ENCODE measurements at regions of chr3 and their contacts with region 1.

Region 1: GRCh38 chr3:49841126-49841696 is 15.2 kb downstream of the TRAIP start:
- DNase-seq: no peak
- H3K4me3 ChIP-seq: no peak overlapping the region
- H3K27ac ChIP-seq: no peak overlapping the region
- H3K4me1 ChIP-seq: peaks cover 6% of the 10 kb centered on the region
- H3K27me3 ChIP-seq: no peaks in the 10 kb centered on the region
- CTCF ChIP-seq: no peak
- POLR2A ChIP-seq: no peak

Region 2: DNA sequence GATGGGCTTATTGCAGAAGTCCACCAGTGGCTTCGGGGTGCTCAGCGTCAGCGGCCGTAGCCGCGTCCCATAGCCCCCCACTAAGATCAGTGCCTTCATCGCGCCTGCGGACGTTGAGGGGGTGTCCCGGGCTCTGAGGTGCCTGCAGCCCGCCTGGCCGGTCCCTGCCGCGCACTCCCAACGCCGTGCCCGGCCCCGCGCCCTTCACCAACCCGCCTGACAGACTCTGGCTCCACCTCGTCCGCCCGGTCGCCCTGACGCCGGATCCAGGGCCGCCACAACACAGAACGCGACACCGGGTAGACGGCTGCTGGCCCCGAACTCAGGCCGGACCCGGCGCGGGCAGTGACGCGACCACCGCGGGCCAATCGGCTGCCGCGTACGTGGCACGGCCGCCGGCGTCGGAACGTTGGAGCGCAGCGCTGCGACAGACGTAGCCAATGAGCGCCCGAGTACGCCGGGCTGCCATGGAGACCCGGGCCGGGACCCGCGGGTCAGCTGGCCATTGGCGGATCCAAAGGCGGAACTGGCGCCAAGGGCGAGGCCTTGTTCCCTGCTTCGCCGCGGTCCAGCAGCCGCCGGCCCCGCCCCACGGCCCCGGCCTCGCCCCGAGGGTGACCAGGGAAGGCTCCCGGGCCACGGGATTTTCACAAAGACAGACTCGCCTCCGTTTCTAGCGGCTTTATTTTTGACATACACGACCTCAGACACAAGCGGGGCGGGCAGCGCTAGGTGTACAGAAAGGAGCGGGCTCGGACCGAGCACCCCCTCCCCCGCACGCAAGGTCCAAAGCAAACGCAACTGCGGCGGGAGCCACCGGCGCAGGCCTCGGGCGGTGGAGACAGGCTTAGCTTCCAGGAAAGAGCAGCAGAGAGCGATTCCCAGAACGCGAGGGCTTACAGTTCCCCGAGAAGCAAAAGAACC is 117.3 kb before region 1 on chr3 and contains the start of gene GMPPB:
- intact Hi-C with region 1: loop called (anchors 10 kb)
- DNase-seq: peak in 1 of 2 donors; percentile 97
- H3K4me3 ChIP-seq: peak within 1 kb of the TSS; percentile 88 to 93
- H3K27ac ChIP-seq: peak within 1 kb of the TSS; percentile 90
- H3K4me1 ChIP-seq: peaks cover 39% of the 10 kb centered on the region
- H3K27me3 ChIP-seq: no peaks in the 10 kb centered on the region
- CTCF ChIP-seq: no peak
- POLR2A ChIP-seq: peak in 1 of 2 donors; percentile 60
- total RNA-seq, gene GMPPB: 19.9 TPM

Region 3: DNA sequence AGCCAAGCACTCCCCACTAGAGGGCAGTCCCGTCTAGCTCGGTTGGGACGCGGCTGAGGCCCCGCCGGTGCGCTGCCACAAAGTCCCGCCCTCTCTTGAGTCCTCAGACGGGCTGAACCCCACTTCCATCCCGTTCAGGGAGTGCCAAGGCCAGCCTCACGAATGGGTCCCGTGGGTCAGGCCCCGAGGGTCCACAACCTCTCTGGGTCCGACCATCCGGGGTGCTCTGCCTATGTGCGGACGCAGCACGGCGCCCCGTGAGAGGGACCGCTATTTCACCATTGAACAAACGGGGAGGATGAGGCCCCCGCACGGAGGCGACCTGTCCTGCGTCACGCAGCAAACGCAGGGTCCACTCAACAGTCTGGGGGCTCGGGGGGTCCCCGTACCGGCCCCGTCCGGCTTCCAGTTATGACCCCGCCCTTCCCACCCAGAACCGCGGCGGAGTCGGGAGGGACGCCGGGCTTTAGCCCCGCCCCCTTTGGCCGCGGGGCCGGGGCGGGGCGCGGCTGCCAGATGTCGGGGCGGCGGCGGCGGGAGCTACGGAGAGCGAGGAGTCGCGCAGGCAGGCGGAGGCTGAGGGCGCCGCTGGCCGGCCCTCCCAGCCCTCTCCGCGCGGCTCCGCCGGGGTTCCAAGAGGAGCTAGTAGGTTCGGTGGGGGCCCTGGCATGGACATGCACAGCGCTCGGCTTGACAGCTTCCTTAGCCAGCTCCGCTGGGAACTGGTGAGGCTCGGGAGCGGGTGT is 38.3 kb before region 1 on chr3 and contains the start of gene INKA1:
- intact Hi-C with region 1: loop called (anchors 5 kb)
- DNase-seq: no peak
- H3K4me3 ChIP-seq: peak within 1 kb of the TSS; percentile 82 to 90
- H3K27ac ChIP-seq: peak within 1 kb of the TSS; percentile 98
- H3K4me1 ChIP-seq: peaks cover 46% of the 10 kb centered on the region
- H3K27me3 ChIP-seq: no peaks in the 10 kb centered on the region
- CTCF ChIP-seq: peak; percentile 80 to 93 (median 81)
- POLR2A ChIP-seq: peak in 1 of 2 donors; percentile 70
- total RNA-seq, gene INKA1: 12.5 TPM

Region 4: DNA sequence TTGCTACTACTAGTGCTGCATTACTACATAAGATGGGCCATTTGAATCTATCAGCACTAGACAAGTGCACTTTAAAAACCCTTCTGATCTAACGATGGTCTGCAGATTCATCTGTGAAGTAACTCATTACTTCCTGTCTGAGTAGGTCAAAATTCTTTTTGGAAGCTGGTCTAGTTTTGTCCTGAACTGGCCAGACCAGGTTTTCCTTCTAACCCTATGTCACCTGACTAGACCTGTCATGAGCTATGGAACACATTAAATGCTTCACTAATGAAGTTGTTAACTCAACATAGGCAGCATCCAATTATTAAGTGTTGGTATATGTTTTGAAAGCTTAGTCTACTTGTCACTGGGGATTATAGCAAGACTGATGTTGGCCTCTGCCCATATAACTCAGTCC is 237.4 kb after region 1 on chr3:
- intact Hi-C with region 1: no loop called
- DNase-seq: no peak
- H3K4me3 ChIP-seq: no peak overlapping the region
- H3K27ac ChIP-seq: no peak overlapping the region
- H3K4me1 ChIP-seq: no peaks in the 10 kb centered on the region
- H3K27me3 ChIP-seq: no peaks in the 10 kb centered on the region
- CTCF ChIP-seq: no peak
- POLR2A ChIP-seq: no peak

Measured in vagina (tissue), 2 donors.